ENCODE measurements at regions of chr9 and their contacts with region 1.

Region 1: GRCh38 chr9:24652181-24652580 is 106.5 kb upstream of the IZUMO3 start:
- H3K4me3 Mint-ChIP-seq: no peak overlapping the region
- H3K27ac Mint-ChIP-seq: no peak overlapping the region
- H3K4me1 Mint-ChIP-seq: no peaks in the 10 kb centered on the region
- H3K27me3 Mint-ChIP-seq: no peaks in the 10 kb centered on the region

Region 2: DNA sequence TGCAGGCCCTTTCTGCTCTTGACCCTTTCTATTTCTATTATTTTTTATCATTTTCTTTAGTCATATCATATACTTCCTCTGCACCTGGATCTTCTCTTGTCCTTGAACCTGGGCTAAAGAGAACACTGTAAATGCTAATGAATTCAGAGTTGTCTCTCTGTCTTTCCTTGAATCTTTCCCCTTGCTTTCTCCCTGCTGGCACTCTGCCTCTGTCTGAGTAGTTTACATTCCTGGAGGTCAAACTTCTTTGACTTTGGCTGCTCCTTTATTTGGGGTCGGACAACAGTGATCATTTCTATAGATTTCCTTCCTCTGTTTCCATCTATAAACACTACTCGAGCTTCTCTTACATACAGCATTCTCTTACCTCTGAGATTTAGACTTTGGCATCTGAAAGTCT is 153.5 kb before region 1 on chr9:
- intact Hi-C with region 1: no loop called
- H3K4me3 Mint-ChIP-seq: no peak overlapping the region
- H3K27ac Mint-ChIP-seq: no peak overlapping the region
- H3K4me1 Mint-ChIP-seq: no peaks in the 10 kb centered on the region
- H3K27me3 Mint-ChIP-seq: no peaks in the 10 kb centered on the region

Region 3: DNA sequence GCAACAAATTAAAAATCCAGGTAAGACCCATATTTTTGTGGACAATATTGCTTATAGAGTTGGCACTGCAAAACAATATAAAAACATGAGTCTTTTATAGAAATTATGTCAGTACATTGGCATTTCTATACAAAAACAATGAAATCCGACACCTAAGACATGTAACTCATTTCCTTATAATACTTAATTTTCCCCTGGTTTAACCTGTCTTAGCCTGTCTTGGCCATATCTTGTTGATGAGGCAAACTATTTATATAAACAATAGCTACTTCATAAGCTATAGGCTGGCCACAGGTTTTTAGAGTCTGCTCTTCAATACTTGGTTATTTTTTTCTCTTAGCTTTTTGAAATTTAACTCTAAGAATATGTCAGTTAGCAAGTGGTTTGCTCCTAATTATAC is 61.7 kb before region 1 on chr9:
- intact Hi-C with region 1: loop called (anchors 10 kb)
- H3K4me3 Mint-ChIP-seq: no peak overlapping the region
- H3K27ac Mint-ChIP-seq: no peak overlapping the region
- H3K4me1 Mint-ChIP-seq: no peaks in the 10 kb centered on the region
- H3K27me3 Mint-ChIP-seq: no peaks in the 10 kb centered on the region

Region 4: DNA sequence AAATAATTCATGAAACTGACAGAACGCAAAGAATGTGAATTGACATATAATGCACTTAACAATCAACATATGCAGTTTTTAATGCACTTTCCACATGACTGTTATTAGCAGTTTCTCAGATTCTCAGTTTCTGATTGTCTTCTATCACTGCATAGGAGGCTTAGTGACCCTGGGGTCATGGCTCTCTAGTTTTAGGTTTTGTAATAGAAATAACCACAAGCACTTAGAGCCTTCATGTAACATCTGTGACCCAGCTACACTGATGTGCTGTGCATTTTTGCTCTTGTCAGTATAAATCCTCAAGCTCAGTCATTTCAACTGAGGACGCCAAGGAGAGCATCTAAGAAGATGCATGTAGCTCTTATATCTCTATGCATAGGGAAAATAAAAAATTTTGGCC is 56.6 kb after region 1 on chr9:
- intact Hi-C with region 1: no loop called
- H3K4me3 Mint-ChIP-seq: no peak overlapping the region
- H3K27ac Mint-ChIP-seq: no peak overlapping the region
- H3K4me1 Mint-ChIP-seq: no peaks in the 10 kb centered on the region
- H3K27me3 Mint-ChIP-seq: no peaks in the 10 kb centered on the region

Measured in dendritic cell treated with granulocyte-macrophage colony-stimulating factor and Interleukin-4, amounts not matched to agents 40 ng/mL and 50 ng/mL, for 4 days (primary cell).